OCI-LY7 (cell line): ENCODE measurements at regions of chr12 and their contacts with region 1.

Region 1: DNA sequence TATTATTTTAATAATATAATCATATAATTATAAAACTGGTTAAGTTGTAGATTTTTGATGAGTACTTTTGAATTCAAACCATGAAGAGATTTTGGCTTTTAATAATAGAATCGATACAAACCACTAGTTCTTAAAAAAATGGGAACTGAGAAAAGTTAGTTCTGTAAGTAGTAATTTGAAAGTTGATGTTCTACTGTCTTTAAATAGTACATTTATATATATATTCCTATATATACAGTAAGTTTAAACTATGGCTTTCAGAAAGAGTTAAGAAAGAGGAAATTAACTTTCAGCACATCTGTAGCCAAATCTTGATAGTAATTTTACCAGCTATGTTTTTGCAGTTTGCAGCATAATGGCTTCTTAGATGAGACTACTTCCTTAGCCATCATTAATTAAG is 7.8 kb downstream of the LRRK2 start:
- DNase-seq: peak; percentile 77
- H3K4me3 ChIP-seq: peak overlapping the region; percentile 46
- H3K27ac ChIP-seq: peak overlapping the region; percentile 92
- H3K4me1 ChIP-seq: peaks cover 65% of the 10 kb centered on the region
- CTCF ChIP-seq: no peak

Region 2: GRCh38 chr12:40208707-40209446 is 23.7 kb before region 1 on chr12:
- CTCF ChIA-PET with region 1: no interaction called
- POLR2A ChIA-PET with region 1: interaction called, 13 read pairs
- intact Hi-C with region 1: no loop called
- DNase-seq: peak; percentile 57
- H3K4me3 ChIP-seq: peak overlapping the region; percentile 3
- H3K27ac ChIP-seq: peak overlapping the region; percentile 25
- H3K4me1 ChIP-seq: peaks cover 17% of the 10 kb centered on the region
- CTCF ChIP-seq: no peak

Region 3: GRCh38 chr12:40248585-40249297 is 16.1 kb after region 1 on chr12:
- CTCF ChIA-PET with region 1: interaction called, 5 read pairs
- POLR2A ChIA-PET with region 1: interaction called, 46 read pairs
- intact Hi-C with region 1: loop called (anchors 2 kb)
- DNase-seq: peak; percentile 56
- H3K4me3 ChIP-seq: peak overlapping the region; percentile 37
- H3K27ac ChIP-seq: peak overlapping the region; percentile 88
- H3K4me1 ChIP-seq: peaks cover 47% of the 10 kb centered on the region
- CTCF ChIP-seq: no peak

Region 4: DNA sequence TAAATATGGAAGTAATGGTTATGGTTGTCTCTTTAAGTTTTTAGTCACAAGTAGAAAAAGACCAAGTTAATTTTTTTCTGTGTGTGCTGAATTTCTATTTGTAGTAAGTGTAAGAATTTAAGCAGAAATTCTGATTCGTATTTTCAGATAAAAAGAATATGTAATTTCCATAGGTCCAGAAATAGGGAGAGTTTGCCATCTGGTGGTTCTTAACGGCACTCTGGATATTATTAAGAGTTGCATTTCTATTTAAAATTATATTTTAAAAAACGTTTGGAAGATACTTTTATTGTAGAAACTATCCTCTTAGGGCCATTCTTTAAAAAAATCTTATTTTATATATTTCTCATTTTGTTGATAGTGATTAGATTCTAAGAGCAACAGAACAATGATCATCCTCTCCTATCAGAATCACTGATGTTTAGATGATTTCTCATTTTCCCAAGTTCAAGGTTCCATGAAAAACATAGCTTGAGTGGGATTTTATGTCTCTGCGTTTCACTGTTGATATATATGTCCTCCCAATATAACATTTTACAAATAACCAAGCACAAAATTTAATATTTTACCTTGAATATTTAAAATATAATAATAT is 80.5 kb after region 1 on chr12:
- CTCF ChIA-PET with region 1: interaction called, 3 read pairs
- POLR2A ChIA-PET with region 1: interaction called, 13 read pairs
- intact Hi-C with region 1: loop called (anchors 2 kb)
- DNase-seq: peak; percentile 54
- H3K4me3 ChIP-seq: no peak overlapping the region
- H3K27ac ChIP-seq: peak overlapping the region; percentile 35
- H3K4me1 ChIP-seq: peaks cover 36% of the 10 kb centered on the region
- CTCF ChIP-seq: peak; percentile 97

Region 5: GRCh38 chr12:40711121-40711520 is 478.5 kb after region 1 on chr12:
- CTCF ChIA-PET with region 1: no interaction called
- POLR2A ChIA-PET with region 1: no interaction called
- intact Hi-C with region 1: no loop called
- DNase-seq: no peak
- H3K4me3 ChIP-seq: no peak overlapping the region
- H3K27ac ChIP-seq: no peak overlapping the region
- H3K4me1 ChIP-seq: no peaks in the 10 kb centered on the region
- CTCF ChIP-seq: no peak